ENCODE measurements at regions of chr6 and their contacts with region 1.

Region 1: GRCh38 chr6:26216356-26216885 is 129.2 kb downstream of the HFE start:
- DNase-seq: no peak
- H3K4me3 ChIP-seq: peak overlapping the region; percentile 87 to 98 (median 90)
- H3K27ac ChIP-seq: peak overlapping the region; percentile 97
- H3K4me1 ChIP-seq: peaks cover 0 to 8% (median 1%) of the 10 kb centered on the region in 4 experiments; a peak in 4 of 7 replicates
- H3K27me3 ChIP-seq: no peaks in the 10 kb centered on the region
- CTCF ChIP-seq: no peak
- EP300 ChIP-seq: no peak
- POLR2A ChIP-seq: peak; percentile 96 to 98
- RAD21 ChIP-seq: no peak

Region 2: DNA sequence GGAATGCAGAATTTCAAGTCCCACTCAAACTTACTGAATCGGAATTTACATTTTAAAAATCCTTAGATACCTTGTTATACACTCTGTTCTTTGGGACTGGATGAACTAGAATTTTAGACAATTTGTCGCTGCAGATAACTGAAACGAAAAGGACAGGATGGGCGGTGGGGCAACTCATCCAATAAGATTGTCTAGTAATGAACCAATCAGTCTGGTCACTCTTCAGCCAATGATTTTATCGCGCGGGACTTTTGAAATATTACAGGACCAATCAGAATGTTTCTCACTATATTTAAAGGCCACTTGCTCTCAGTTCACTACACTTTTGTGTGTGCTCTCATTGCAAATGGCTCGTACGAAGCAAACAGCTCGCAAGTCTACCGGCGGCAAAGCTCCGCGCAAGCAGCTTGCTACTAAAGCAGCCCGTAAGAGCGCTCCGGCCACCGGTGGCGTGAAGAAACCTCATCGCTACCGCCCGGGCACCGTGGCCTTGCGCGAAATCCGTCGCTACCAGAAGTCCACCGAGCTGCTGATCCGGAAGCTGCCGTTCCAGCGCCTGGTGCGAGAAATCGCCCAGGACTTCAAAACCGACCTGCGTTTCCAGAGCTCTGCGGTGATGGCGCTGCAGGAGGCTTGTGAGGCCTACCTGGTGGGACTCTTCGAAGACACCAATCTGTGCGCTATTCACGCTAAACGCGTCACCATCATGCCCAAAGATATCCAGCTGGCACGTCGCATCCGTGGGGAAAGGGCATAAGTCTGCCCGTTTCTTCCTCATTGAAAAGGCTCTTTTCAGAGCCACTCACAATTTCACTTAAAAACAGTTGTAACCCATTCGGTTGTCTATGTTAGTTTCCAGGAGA is 171.1 kb before region 1 on chr6:
- CTCF ChIA-PET with region 1: interaction called, 3 read pairs
- POLR2A ChIA-PET with region 1: interaction called, 14 read pairs
- DNase-seq: no peak
- H3K4me3 ChIP-seq: no peak overlapping the region
- H3K27ac ChIP-seq: 0 out of 2 replicates have a peak overlapping the region, but pooled peaks have one; percentile 22
- H3K4me1 ChIP-seq: peaks cover 0 to 6% (median under 1%) of the 10 kb centered on the region in 4 experiments; a peak in 1 of 7 replicates
- H3K27me3 ChIP-seq: no peaks in the 10 kb centered on the region
- CTCF ChIP-seq: peak in 1 of 3 experiments; percentile 1; a peak in 1 of 4 replicates
- EP300 ChIP-seq: no peak
- POLR2A ChIP-seq: no peak
- RAD21 ChIP-seq: no peak

Region 3: DNA sequence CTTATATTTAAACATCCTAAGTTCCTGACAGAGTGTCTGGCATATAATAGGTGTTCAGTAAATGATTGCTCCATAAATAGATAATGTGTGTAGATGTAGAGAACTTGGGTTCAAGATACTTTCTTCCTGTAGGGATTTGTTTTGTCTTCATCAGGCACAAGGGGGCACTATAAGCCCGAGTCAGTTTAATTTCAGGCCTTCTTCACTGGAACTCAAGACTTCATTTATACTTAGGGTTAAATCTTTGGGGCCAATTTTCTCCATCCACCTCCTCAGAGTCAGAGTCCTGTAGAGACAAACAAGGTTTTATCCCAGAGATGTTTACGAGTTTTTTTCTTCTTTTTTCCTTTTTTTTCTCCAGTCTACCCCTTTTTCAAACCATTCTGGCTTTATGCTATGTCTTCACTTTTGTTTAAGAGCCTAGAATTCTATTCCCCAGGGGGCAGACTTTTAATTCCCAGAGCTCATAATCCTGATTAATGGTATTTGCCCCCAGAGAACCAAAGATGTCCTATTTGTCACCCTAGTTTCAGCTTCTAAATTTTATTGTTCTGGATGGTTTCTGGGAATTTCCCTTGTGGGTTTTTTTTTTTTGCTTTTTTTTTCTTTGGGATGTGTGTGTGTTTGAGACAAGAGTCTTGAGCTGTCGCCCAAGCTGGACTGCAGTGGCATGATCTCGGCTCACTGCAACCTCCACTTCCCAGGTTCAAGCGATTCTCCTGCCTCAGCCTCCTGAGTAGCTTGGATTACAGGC is 40.8 kb before region 1 on chr6:
- CTCF ChIA-PET with region 1: interaction called, 7 read pairs
- POLR2A ChIA-PET with region 1: interaction called, 2,060 read pairs
- DNase-seq: peak in 1 of 2 experiments; percentile 54
- H3K4me3 ChIP-seq: 0 out of 8 replicates have a peak overlapping the region, but pooled peaks of 1 of the 4 experiments have one; percentile 14
- H3K27ac ChIP-seq: no peak overlapping the region
- H3K4me1 ChIP-seq: peaks cover 0 to 2% (median 0%) of the 10 kb centered on the region in 4 experiments; a peak in 3 of 7 replicates
- H3K27me3 ChIP-seq: no peaks in the 10 kb centered on the region
- CTCF ChIP-seq: peak in 2 of 3 experiments; percentile 51 to 65; a peak in 2 of 4 replicates
- EP300 ChIP-seq: no peak
- POLR2A ChIP-seq: no peak
- RAD21 ChIP-seq: peak; percentile 79 to 83

Region 4: GRCh38 chr6:26204332-26205165 is 11.9 kb before region 1 on chr6:
- CTCF ChIA-PET with region 1: interaction called, 14 read pairs
- POLR2A ChIA-PET with region 1: interaction called, 2,731 read pairs
- DNase-seq: peak; percentile 88 to 97
- H3K4me3 ChIP-seq: peak overlapping the region; percentile 64 to 94 (median 82)
- H3K27ac ChIP-seq: peak overlapping the region; percentile 98
- H3K4me1 ChIP-seq: peaks cover 0 to 15% (median 5%) of the 10 kb centered on the region in 4 experiments; a peak in 6 of 7 replicates
- H3K27me3 ChIP-seq: no peaks in the 10 kb centered on the region
- CTCF ChIP-seq: peak in 1 of 3 experiments; percentile 18; a peak in 1 of 4 replicates
- EP300 ChIP-seq: peak; percentile 13 to 95; a peak in 2 of 3 replicates
- POLR2A ChIP-seq: peak; percentile 99 to 100
- RAD21 ChIP-seq: 0 out of 4 replicates have a peak, but pooled peaks of 1 of the 2 experiments have one; percentile 14

Region 5: GRCh38 chr6:26322645-26323482 is 106.4 kb after region 1 on chr6:
- CTCF ChIA-PET with region 1: no interaction called
- POLR2A ChIA-PET with region 1: interaction called, 12 read pairs
- DNase-seq: peak in 1 of 2 experiments; percentile 81
- H3K4me3 ChIP-seq: peak overlapping the region; percentile 70 to 89 (median 78)
- H3K27ac ChIP-seq: no peak overlapping the region
- H3K4me1 ChIP-seq: peaks cover 0 to 5% (median 2%) of the 10 kb centered on the region in 4 experiments; a peak in 3 of 7 replicates
- H3K27me3 ChIP-seq: peaks cover 0 to 4% (median 0%) of the 10 kb centered on the region in 4 experiments; a peak in 1 of 7 replicates
- CTCF ChIP-seq: no peak
- EP300 ChIP-seq: no peak
- POLR2A ChIP-seq: no peak
- RAD21 ChIP-seq: no peak

Region 6: DNA sequence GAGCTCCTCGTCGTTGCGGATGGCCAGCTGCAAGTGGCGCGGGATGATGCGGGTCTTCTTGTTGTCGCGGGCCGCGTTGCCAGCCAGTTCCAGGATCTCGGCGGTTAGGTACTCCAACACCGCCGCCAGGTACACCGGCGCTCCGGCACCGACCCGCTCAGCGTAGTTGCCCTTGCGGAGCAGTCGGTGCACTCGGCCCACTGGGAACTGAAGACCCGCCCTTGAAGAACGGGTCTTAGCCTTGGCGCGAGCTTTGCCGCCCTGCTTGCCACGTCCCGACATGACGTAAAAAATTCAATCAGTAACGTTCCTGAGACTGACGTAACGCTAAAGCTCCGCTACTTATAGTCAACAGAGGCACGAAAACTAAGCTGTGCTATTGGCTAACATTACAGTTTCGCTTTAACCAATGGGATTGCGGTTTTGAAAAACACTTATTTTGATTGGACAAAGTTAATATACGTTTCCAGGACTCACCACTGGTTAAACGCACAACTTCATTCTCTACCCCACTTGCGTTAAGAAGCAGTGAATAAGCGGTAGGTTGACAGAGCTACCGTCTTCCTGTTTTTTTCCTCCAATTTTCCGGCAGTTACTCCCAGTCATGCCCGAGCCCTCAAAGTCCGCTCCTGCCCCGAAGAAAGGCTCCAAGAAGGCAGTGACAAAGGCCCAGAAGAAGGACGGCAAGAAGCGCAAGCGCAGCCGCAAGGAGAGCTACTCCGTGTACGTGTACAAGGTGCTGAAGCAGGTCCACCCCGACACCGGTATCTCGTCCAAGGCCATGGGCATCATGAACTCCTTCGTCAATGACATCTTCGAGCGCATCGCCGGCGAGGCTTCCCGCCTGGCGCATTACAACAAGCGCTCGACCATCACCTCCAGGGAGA is 1621.9 kb after region 1 on chr6:
- CTCF ChIA-PET with region 1: no interaction called
- POLR2A ChIA-PET with region 1: interaction called, 42 read pairs
- DNase-seq: peak; percentile 76 to 87
- H3K4me3 ChIP-seq: peak overlapping the region; percentile 77 to 96 (median 93)
- H3K27ac ChIP-seq: peak overlapping the region; percentile 98
- H3K4me1 ChIP-seq: peaks cover 0 to 5% (median 2%) of the 10 kb centered on the region in 4 experiments; a peak in 1 of 7 replicates
- H3K27me3 ChIP-seq: no peaks in the 10 kb centered on the region
- CTCF ChIP-seq: no peak
- EP300 ChIP-seq: no peak
- POLR2A ChIP-seq: peak; percentile 88 to 91
- RAD21 ChIP-seq: no peak